Activated naive CD4-positive, alpha-beta T cell treated with anti-CD3 and anti-CD28 coated beads for 36 hours (primary cell): ENCODE measurements at regions of chr14 and their contacts with region 1.

Region 1: GRCh38 chr14:89915114-89915878 is 39.2 kb downstream of the EFCAB11 start:
- DNase-seq: peak; percentile 79
- H3K4me3 Mint-ChIP-seq: no peak overlapping the region
- H3K27ac Mint-ChIP-seq: no peak overlapping the region
- H3K4me1 Mint-ChIP-seq: no peaks in the 10 kb centered on the region
- H3K27me3 Mint-ChIP-seq: peaks cover 3% of the 10 kb centered on the region

Region 2: GRCh38 chr14:89027097-89027740 is 888.1 kb before region 1 on chr14:
- CTCF ChIA-PET with region 1: interaction called, 5 read pairs
- intact Hi-C with region 1: loop called (anchors 1 kb)
- DNase-seq: peak; percentile 50
- H3K4me3 Mint-ChIP-seq: peak overlapping the region; percentile 59
- H3K27ac Mint-ChIP-seq: no peak overlapping the region
- H3K4me1 Mint-ChIP-seq: no peaks in the 10 kb centered on the region
- H3K27me3 Mint-ChIP-seq: peaks cover 50% of the 10 kb centered on the region

Region 3: GRCh38 chr14:89040460-89041259 is 874.6 kb before region 1 on chr14:
- CTCF ChIA-PET with region 1: interaction called, 4 read pairs
- intact Hi-C with region 1: loop called (anchors 1 kb)
- DNase-seq: peak; percentile 91
- H3K4me3 Mint-ChIP-seq: peak overlapping the region; percentile 70
- H3K27ac Mint-ChIP-seq: no peak overlapping the region
- H3K4me1 Mint-ChIP-seq: peaks cover 12% of the 10 kb centered on the region
- H3K27me3 Mint-ChIP-seq: peaks cover 8% of the 10 kb centered on the region

Region 4: DNA sequence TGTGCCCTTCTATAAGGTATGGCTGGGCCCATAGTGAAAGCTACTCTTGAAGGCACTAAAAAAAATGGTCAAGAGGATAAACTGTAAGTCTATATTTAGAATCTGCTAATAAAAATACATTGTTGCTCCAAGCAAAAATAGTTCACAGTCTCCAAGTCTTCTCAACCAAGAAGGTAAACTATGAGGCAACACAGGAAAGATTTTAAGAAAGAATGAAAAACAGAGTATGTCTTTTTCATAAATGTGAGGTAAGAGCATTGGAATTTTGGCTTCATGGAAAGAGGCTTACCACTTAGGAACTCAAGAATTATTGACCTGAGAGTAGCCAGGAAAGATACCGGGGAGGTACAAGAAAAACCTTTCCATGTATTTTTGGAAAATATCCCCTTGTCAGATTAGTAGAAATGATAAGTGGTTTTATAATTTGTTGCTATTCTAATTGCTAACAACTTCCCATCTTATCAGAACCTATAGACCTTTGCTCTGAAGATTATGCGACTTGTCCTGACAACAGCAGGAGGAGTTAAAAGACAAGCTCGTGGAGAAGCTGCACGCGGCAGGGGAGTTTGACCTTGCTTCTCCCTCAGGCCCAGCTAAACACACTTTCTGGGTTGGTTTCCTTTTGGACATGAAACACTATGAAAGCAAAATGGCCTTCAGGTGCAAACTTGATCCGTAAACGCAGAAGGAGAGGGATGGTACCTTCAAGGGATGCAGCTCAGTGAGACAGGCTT is 736.3 kb before region 1 on chr14:
- CTCF ChIA-PET with region 1: no interaction called
- intact Hi-C with region 1: loop called (anchors 1 kb)
- DNase-seq: no peak
- H3K4me3 Mint-ChIP-seq: no peak overlapping the region
- H3K27ac Mint-ChIP-seq: no peak overlapping the region
- H3K4me1 Mint-ChIP-seq: peaks cover 9% of the 10 kb centered on the region
- H3K27me3 Mint-ChIP-seq: no peaks in the 10 kb centered on the region

Region 5: DNA sequence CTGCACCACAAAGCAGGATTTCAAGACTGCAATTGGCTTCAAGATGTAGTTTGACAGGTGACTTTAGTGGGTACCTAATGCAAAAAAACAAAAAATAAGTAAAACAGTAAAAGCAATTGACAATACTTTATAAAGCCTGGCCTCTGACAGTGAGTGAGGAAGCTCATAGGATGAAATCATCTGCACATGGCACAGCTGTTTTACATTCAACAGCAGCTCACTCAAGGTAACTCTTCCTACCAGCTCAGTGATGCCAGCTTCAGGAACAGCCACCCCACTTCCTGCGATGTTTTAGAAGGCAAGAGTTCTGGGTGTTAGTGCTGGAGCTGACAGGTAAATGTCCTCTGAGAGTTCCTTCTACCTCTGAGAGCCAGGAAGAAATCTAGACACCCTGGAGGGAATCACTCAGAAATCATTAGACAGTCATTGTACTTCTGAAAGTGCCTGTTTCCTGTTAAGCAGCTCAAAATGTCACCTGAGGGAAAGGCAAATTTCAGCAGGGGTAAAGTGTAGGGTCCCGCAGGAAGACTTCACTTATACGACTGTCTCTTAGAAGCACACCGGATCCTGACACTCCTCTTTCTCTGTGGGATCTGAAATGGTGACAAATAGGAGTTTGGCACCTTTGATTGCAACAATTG is 598.1 kb before region 1 on chr14:
- CTCF ChIA-PET with region 1: no interaction called
- intact Hi-C with region 1: loop called (anchors 10 kb)
- DNase-seq: no peak
- H3K4me3 Mint-ChIP-seq: no peak overlapping the region
- H3K27ac Mint-ChIP-seq: no peak overlapping the region
- H3K4me1 Mint-ChIP-seq: peaks cover 47% of the 10 kb centered on the region
- H3K27me3 Mint-ChIP-seq: no peaks in the 10 kb centered on the region

Region 6: DNA sequence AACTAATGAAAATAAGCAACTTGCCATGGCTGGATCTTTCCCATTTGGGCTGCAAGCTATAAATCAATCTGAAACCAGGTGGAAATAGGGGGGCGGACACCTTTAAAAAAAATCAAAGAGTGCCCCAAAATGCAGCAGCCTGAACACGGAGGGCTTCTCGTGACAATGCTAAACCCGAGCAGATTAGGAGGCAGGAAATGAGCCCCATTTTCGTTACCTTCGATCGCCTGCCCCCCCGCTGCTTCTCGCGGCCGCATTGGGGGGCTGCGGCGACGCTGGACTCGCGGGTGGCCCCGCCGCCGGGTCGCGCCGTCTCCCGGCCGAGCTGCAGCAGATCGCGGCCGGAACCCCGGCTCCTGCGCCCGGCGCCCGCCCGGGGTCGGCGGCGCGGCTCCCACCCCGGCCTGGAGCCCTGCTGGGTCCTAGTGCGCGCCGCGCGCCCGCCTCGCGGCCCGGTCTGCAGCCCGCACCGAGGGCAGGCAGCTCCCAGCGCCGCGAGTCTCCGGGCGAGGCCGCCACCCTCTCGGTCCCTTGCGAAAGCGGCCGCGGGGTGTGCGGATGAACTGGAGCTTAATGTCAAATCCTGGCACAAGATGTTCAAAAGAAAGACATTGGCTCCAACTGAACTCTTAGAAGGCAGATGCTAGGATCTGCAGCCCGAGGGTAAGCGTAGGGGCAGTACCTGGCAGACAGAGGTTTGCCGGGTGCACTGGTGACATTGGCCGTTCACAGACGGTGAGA is 296.3 kb before region 1 on chr14:
- CTCF ChIA-PET with region 1: no interaction called
- intact Hi-C with region 1: no loop called
- DNase-seq: peak; percentile 60
- H3K4me3 Mint-ChIP-seq: peak overlapping the region; percentile 86
- H3K27ac Mint-ChIP-seq: peak overlapping the region; percentile 98
- H3K4me1 Mint-ChIP-seq: peaks cover 64% of the 10 kb centered on the region
- H3K27me3 Mint-ChIP-seq: no peaks in the 10 kb centered on the region

Region 7: GRCh38 chr14:89773644-89774316 is 141.5 kb before region 1 on chr14:
- CTCF ChIA-PET with region 1: no interaction called
- intact Hi-C with region 1: loop called (anchors 5 kb)
- DNase-seq: peak; percentile 85
- H3K4me3 Mint-ChIP-seq: peak overlapping the region; percentile 44
- H3K27ac Mint-ChIP-seq: no peak overlapping the region
- H3K4me1 Mint-ChIP-seq: peaks cover 22% of the 10 kb centered on the region
- H3K27me3 Mint-ChIP-seq: no peaks in the 10 kb centered on the region

Region 8: DNA sequence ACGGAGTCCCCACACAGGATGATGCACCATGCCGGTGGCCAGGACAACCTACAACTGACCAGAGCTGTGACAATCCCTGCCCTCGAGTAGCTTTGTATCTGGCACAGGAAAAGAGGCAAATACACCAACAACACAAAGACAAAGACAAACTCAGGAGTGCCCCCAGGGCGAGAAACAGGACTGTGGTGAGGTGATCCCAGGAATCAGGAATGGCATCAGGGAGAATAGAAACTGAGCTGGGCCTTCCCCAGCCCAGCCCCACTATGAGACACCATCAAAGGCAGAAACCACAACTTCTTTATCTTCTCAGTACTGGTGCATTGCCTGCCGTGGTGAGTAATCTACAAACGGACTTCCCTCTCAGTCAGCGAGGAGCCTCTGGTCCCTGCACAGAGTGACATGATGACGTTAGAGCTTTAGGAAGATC is 743.3 kb after region 1 on chr14:
- CTCF ChIA-PET with region 1: no interaction called
- intact Hi-C with region 1: no loop called
- DNase-seq: peak; percentile 55
- H3K4me3 Mint-ChIP-seq: no peak overlapping the region
- H3K27ac Mint-ChIP-seq: no peak overlapping the region
- H3K4me1 Mint-ChIP-seq: peaks cover 11% of the 10 kb centered on the region
- H3K27me3 Mint-ChIP-seq: no peaks in the 10 kb centered on the region